ENCODE measurements at regions of chr2 and their contacts with region 1.

Region 1: DNA sequence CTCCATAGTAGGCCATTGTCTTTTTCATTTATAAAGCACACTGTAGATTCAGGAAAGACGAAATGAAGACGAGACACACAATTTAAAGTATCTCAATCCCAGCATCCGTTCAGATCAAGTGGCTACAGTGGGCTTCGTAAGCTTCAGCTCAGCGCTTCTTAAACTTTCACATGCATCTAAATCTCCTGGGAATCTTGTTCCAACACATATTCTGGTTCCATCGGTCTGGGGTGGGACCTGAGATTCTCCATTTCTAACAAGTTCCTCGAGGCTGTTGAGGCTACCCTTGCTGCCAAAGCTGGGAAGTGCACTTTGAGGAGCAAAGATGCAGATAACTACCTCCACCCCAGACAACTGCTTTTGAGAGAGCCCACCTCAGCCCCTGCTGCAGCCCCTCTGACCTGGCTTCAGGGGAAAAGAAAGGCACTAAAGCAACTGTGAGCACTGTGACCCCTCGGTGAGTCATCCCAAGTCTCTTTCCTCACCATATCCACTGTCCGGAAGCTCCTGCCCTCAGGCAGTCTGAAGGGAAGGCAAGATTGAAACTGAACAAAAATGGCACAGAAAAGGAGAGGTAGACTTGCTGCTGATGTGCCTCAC is 201.1 kb upstream of the FBXO11 start:
- DNase-seq: no peak
- H3K4me3 ChIP-seq: no peak overlapping the region
- H3K27ac ChIP-seq: peak overlapping the region; percentile 91
- H3K27me3 ChIP-seq: no peaks in the 10 kb centered on the region
- CTCF ChIP-seq: peak; percentile 42

Region 2: GRCh38 chr2:48092846-48093803 is 14.3 kb before region 1 on chr2:
- CTCF ChIA-PET with region 1: interaction called, 17 read pairs
- POLR2A ChIA-PET with region 1: no interaction called
- DNase-seq: no peak
- H3K4me3 ChIP-seq: no peak overlapping the region
- H3K27ac ChIP-seq: no peak overlapping the region
- H3K27me3 ChIP-seq: no peaks in the 10 kb centered on the region
- CTCF ChIP-seq: no peak

Region 3: GRCh38 chr2:48420512-48421197 is 313.2 kb after region 1 on chr2:
- CTCF ChIA-PET with region 1: interaction called, 48 read pairs
- POLR2A ChIA-PET with region 1: no interaction called
- DNase-seq: peak; percentile 63
- H3K4me3 ChIP-seq: no peak overlapping the region
- H3K27ac ChIP-seq: no peak overlapping the region
- H3K27me3 ChIP-seq: no peaks in the 10 kb centered on the region
- CTCF ChIP-seq: peak; percentile 98